Adrenal gland (tissue), 19 donors: ENCODE measurements at regions of chr1 and their contacts with region 1.

Region 1: DNA sequence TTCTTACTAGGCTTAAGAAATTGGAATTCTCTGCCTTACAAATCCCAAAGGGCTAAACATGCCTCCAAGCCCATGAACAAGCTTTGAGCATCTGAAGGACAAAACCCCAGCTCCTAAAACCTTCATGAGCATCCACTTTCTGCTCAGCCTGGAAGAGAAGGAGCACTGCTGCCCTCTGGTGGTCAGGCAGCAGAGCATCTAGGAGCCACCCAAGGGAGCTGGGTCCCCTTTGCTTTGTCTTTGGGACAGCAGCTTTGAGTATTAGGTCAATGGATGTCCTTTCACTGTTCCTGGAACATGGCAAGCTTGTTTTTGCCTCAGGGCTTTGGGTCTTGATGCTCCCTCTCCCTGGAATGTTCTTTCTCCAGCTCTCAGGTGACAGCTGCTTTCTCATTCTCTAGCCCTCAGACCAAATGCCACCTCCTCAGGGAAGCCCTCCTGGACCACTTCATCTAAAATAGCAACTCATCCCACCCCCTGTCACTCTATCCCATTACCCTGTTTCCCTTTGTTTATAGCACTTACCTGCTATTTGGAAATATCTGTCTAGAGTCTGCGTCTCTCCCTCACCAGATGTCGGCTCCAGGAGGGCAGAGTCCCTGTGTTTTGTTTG is 25.7 kb downstream of the RAB7B start:
- DNase-seq: peak; percentile 67 to 84 (median 77)
- H3K4me3 ChIP-seq: no peak overlapping the region
- H3K27ac ChIP-seq: no peak overlapping the region
- H3K4me1 ChIP-seq: no peaks in the 10 kb centered on the region
- H3K27me3 ChIP-seq: no peaks in the 10 kb centered on the region
- CTCF ChIP-seq: peak; percentile 94 to 97 (median 96)
- POLR2A ChIP-seq: no peak

Region 2: DNA sequence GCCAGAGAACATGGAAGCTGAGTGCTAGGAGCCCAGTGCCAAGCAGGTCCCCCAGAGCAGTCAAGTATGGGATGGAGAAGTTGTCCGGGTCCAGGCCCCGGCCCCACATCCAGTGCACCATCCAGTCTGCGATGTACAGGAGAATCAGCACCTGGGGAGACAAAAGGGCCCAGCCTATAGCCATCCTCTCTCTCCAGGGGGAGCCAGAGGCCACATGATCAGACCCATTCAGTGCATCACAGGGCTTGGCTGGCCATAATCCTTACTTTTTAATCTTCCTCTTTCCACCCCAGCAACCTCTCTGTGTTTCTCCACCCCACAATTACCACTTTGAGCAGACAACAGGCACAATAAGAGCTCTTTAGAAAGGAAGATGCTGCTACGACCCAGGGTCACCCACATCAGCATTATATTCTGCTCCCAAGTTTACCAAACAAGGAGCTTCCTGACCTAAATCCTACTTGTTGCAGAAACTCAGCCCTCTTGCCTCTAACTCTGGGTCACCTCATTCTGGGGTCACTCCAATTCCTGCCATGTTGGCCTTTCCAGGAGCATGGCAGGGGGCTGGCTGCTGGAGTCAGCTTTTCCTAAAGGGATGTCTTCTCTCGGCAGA is 185.8 kb before region 1 on chr1:
- intact Hi-C with region 1: loop called (anchors 2 to 5 kb)
- DNase-seq: peak; percentile 60 to 88 (median 68)
- H3K4me3 ChIP-seq: no peak overlapping the region
- H3K27ac ChIP-seq: no peak overlapping the region
- H3K4me1 ChIP-seq: no peaks in the 10 kb centered on the region
- H3K27me3 ChIP-seq: no peaks in the 10 kb centered on the region
- CTCF ChIP-seq: peak; percentile 54 to 86 (median 76)
- POLR2A ChIP-seq: no peak